AG04449 (cell line): ENCODE measurements at regions of chr19 and their contacts with region 1.

Region 1: GRCh38 chr19:13195678-13196077 is 45.5 kb downstream of the IER2 start:
- DNase-seq: no peak
- H3K4me3 ChIP-seq: no peak overlapping the region
- CTCF ChIP-seq: no peak

Region 2: GRCh38 chr19:13169810-13170209 is 25.9 kb before region 1 on chr19:
- CTCF ChIA-PET with region 1: interaction called, 10 read pairs
- POLR2A ChIA-PET with region 1: no interaction called
- DNase-seq: no peak
- H3K4me3 ChIP-seq: no peak overlapping the region
- CTCF ChIP-seq: no peak

Region 3: DNA sequence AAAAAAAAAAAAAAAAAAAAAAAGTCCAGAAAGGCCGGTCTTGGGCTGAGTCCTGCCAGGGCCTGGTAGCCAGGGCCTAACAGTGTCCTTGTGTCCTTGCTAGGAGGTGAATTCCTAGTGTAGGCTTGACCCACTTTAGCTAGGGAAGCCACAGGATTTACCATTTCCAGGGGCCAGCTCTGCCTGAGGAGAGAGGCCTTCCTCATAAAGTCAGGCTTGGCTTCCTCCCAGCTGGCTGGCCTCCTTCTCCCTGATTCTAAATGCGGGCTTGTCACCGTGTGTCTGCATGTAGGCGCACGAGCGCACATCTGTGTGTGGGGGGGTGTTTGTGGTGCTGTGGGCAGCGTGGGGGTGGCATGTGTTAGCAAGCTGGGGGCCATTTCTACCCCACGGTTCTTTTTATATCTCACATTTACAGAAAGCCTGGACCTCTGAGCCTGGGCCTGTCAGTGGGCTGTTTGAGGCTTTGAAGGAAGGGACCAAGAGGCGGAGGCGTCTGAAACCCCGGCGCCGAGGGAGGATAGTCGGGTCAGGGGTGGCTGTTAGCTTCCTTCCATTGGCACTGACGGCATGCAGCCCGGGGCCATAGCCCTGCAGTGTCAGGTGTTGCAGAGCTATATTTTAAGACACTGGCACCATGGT is 13.8 kb before region 1 on chr19:
- CTCF ChIA-PET with region 1: interaction called, 57 read pairs
- POLR2A ChIA-PET with region 1: no interaction called
- DNase-seq: no peak
- H3K4me3 ChIP-seq: no peak overlapping the region
- CTCF ChIP-seq: no peak

Region 4: GRCh38 chr19:13207237-13207845 is 11.7 kb after region 1 on chr19:
- CTCF ChIA-PET with region 1: interaction called, 50 read pairs
- POLR2A ChIA-PET with region 1: no interaction called
- DNase-seq: no peak
- H3K4me3 ChIP-seq: no peak overlapping the region; the same call in 1 of the 2 replicates
- CTCF ChIP-seq: no peak

Region 5: DNA sequence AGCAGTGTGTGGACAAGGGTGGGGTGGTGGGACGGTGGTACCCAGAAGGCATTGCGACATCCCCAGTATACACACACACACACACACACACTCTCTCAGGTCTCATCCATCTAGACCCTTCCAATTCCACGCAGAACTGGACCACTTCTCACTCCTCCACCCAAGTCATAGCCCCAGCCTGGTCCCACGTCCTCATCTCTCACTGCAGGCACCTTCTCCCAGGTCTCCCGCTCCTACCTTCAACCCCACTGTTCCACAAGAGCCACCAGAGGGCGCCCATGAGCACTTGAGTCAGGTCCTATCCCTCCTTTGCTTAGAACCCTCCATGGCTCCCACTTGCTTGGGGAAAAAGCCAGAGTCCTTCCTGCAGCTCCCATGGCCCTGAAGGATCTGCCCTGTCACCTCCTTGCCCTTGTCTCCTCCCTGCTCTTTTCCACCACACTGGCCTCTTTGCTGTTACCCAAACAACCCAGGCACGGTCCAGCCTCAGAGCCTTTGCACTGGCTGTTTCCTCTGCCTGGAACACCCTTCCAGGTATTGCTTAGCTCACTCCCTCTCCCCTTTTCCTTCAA is 17.2 kb after region 1 on chr19:
- CTCF ChIA-PET with region 1: interaction called, 11 read pairs
- POLR2A ChIA-PET with region 1: no interaction called
- DNase-seq: no peak
- H3K4me3 ChIP-seq: no peak overlapping the region
- CTCF ChIP-seq: peak; percentile 59

Region 6: GRCh38 chr19:13262450-13262849 is 66.8 kb after region 1 on chr19:
- CTCF ChIA-PET with region 1: interaction called, 32 read pairs
- POLR2A ChIA-PET with region 1: no interaction called
- DNase-seq: no peak
- H3K4me3 ChIP-seq: no peak overlapping the region
- CTCF ChIP-seq: peak; percentile 48